ENCODE measurements at regions of chr3 and their contacts with region 1.

Region 1: GRCh38 chr3:143972505-143973255 is 1.1 kb downstream of the DIPK2A start:
- DNase-seq: peak; percentile 66
- H3K4me3 Mint-ChIP-seq: peak overlapping the region; percentile 88
- H3K27ac Mint-ChIP-seq: peak overlapping the region; percentile 89
- H3K4me1 Mint-ChIP-seq: peaks cover 33% of the 10 kb centered on the region
- H3K27me3 Mint-ChIP-seq: peaks cover 20% of the 10 kb centered on the region

Region 2: GRCh38 chr3:142595951-142596725 is 1376.5 kb before region 1 on chr3 and contains the start of gene PLS1:
- intact Hi-C with region 1: loop called (anchors 1 kb)
- DNase-seq: peak; percentile 89
- H3K4me3 Mint-ChIP-seq: peak within 1 kb of the TSS; percentile 95
- H3K27ac Mint-ChIP-seq: peak within 1 kb of the TSS; percentile 69
- H3K4me1 Mint-ChIP-seq: peaks cover 25% of the 10 kb centered on the region
- H3K27me3 Mint-ChIP-seq: peaks cover 4% of the 10 kb centered on the region
- total RNA-seq, gene PLS1: 4.4 and 4.8 TPM in 2 replicates

Region 3: DNA sequence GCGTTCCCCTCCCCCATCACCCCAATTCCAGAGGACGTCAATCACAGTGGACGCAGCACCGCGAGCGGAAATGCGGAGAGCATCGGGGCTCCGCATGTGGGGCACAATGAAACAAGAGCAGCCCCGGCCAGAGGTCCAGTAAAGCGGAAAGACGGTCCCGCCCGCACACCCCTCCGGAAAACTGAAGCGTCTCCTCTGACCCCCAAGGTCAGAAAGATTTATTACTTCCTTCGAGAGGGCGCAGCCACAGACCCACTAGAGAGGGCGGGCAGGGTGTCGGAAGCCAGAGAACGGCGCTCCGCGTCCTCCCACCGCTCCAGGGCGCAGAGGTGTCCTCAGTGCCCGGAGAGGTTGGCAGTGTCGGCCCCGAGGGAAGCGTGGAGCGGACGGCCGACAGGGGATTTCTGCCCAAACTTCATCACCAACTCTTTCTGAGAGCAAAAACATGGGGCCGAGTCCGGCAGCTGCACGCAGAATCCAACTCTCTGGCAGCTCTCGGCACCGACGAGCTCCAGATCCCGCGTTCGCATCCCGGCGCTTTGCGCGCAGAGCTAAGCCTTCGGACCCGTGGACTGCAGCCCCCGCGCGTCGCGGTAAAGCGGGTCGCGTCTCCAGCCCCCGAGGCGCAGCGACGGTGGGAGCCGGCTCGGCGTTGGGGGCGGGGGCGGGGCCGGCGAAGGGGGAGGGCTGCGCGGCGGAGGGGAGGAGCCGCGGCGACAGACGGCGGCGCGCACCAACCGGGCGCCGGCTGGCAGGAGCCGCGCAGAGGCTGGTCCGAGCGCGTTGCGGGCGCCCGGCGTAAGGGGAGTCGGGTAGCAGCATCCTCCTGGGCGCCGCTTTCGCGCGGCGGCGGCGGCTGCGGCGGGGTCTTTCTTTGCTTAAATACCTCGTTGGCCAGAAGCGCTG is 853.4 kb before region 1 on chr3 and contains the start of gene CHST2:
- intact Hi-C with region 1: loop called (anchors 1 kb)
- DNase-seq: peak; percentile 62
- H3K4me3 Mint-ChIP-seq: peak within 1 kb of the TSS; percentile 92
- H3K27ac Mint-ChIP-seq: peak within 1 kb of the TSS; percentile 74
- H3K4me1 Mint-ChIP-seq: peaks cover 35% of the 10 kb centered on the region
- H3K27me3 Mint-ChIP-seq: peaks cover 10% of the 10 kb centered on the region
- total RNA-seq, gene CHST2: 11.3 and 11.4 TPM in 2 replicates

Region 4: DNA sequence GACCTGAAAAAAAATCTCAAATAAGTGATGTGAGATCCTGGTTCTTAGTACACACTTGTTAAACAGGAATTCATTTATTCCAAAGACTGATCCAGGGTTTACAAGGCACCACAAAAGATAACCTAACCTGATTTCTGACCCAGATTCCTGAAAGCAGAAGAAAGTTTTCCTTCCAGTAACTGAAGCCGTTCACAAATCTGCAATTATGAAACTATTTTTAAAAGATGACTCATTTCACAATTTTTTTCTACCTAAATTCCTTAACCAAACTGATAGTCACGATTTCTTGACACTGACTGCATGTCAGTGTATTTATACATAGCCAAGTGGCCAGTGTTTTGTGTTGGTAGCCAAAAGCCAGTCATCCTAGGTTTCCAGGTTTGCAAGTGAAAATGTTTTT is 141.5 kb before region 1 on chr3:
- intact Hi-C with region 1: loop called (anchors 1 kb)
- DNase-seq: no peak
- H3K4me3 Mint-ChIP-seq: no peak overlapping the region
- H3K27ac Mint-ChIP-seq: no peak overlapping the region
- H3K4me1 Mint-ChIP-seq: peaks cover 43% of the 10 kb centered on the region
- H3K27me3 Mint-ChIP-seq: no peaks in the 10 kb centered on the region

Region 5: GRCh38 chr3:143991713-143992112 is 19.0 kb after region 1 on chr3:
- intact Hi-C with region 1: loop called (anchors 2 kb)
- DNase-seq: no peak
- H3K4me3 Mint-ChIP-seq: no peak overlapping the region
- H3K27ac Mint-ChIP-seq: no peak overlapping the region
- H3K4me1 Mint-ChIP-seq: no peaks in the 10 kb centered on the region
- H3K27me3 Mint-ChIP-seq: no peaks in the 10 kb centered on the region

Region 6: DNA sequence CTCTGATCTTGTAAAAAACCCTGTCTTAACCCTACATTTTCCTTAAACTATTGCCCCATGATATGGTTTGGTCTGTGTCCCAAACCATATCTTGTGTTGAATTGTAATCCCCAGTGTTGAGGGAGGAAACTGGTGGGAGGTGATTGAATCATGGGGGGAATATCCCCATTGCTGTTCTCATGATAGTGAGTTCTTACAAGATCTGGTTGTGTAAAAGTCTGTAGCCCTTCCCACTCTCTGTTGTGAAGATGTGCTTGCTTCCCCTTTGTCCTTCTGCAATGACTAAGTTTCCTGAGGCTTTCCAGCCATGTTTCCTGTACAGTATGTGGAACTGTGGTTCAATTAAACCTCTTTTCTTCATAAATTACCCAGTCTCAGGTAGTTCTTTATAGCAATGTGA is 880.3 kb after region 1 on chr3:
- intact Hi-C with region 1: no loop called
- DNase-seq: no peak
- H3K4me3 Mint-ChIP-seq: no peak overlapping the region
- H3K27ac Mint-ChIP-seq: no peak overlapping the region
- H3K4me1 Mint-ChIP-seq: no peaks in the 10 kb centered on the region
- H3K27me3 Mint-ChIP-seq: no peaks in the 10 kb centered on the region

Measured in activated T-helper 1 cell treated with anti-CD3 and anti-CD28 coated beads, Interleukin-12 subunit alpha, Interleukin-12 subunit beta, Interleukin-2, Interleukin-4 antibody, amounts not matched to agents 30 ng/mL and 10 ng/mL and 1 ng/mL, durations not matched to agents 14 hours and 24 hours and 36 hours (primary cell).